ENCODE measurements at regions of chr11 and their contacts with region 1.

Region 1: DNA sequence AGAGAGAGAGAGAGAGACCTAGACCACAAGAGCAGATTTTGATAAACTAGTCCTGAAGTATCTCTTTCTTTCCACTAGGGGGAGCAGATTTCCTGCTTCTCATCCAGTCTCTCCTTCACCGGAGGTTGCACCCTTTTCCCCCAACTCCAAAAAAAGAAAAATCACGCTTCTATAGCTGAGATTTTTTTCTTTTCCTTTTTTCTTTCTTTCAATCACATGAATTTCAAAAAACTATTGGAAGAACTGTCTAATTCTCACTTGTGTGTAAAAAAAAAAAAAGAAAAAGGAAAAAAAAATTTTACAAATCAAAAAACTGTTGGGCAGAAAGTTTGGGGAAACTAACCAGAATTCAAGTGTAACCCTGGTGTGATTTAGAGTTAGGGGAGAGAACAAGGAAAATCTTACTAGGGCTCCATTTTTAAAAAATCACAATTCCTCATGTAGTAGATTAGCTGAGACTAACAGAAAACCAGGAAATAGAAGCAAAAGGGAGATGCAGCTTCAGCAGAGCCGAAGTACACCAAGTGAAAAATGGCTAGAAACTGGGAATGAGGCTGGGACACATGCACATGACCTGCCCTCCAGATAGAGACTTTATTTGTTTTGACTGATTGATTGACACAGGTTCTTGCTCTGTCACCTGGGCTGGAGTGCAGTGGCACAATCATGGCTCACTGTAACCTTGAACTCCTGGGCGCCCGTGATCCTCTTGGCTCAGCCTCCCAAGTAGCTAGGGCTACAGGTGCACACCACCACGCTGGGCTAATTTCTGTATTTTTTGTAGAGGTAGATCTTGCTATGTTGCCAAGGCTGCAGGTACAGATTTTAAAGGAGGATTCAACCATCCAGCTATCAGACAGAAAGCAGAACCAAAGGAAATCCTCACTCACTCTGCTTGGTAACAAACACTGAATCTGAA is 27.1 kb downstream of the SDHD start:
- DNase-seq: no peak
- ATAC-seq: peak; percentile 87
- H3K4me3 ChIP-seq: no peak overlapping the region
- H3K27ac ChIP-seq: peak overlapping the region; percentile 24; the same call in 1 of the 2 replicates
- H3K4me1 ChIP-seq: no peaks in the 10 kb centered on the region
- H3K27me3 ChIP-seq: no peaks in the 10 kb centered on the region
- CTCF ChIP-seq: peak; percentile 71; the same call in 1 of the 2 replicates

Region 2: GRCh38 chr11:112163875-112164685 is 50.3 kb after region 1 on chr11 and contains the start of gene IL18:
- CTCF ChIA-PET with region 1: interaction called, 3 read pairs
- POLR2A ChIA-PET with region 1: no interaction called
- in situ Hi-C with region 1: no loop called
- intact Hi-C with region 1: loop called (anchors 5 kb)
- DNase-seq: peak; percentile 78
- ATAC-seq: peak; percentile 96
- H3K4me3 ChIP-seq: peak within 1 kb of the TSS; percentile 49 to 77
- H3K27ac ChIP-seq: peak within 1 kb of the TSS; percentile 79
- H3K4me1 ChIP-seq: peaks cover 41% of the 10 kb centered on the region
- H3K27me3 ChIP-seq: no peaks in the 10 kb centered on the region
- CTCF ChIP-seq: no peak
- total RNA-seq, gene IL18: 22.5 TPM

Region 3: DNA sequence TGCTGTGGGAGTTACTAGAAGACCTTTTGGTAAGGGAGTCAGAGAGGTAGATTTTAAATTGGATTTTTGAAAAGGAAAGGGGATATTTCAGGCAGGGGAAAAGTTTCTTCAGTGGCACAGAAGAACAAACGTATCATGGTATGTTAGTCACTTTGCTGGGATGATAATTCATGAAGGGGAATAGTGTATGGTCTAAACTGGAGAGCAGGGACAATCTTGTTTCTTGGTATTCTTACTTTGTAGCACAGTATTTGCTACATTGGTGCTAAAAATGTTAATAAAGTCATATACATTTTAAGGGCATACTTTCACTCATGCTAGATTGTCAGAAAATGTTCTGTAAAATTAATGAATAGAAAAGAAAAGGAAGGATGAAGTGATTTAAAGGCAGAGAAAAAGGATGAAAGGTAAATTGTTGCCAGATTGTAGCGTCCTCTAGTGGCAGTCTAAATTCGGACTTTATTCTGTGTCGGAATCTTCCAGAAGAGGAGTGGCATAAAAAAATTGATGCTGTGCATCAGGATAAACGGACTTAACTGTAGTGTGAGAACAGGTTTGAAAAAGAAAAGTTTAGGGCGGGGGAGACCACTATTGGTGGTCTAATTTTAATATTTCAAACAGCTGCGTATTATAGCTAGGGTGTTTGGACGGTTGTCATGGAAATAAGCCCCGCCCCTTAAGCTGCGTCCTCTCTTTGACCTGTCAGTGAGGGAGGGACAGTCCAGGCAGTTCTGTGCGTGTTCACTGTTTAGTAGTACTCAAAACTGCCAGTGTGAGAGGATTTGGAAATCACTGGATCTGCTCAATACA is 61.2 kb after region 1 on chr11 and contains the start of gene BCO2:
- CTCF ChIA-PET with region 1: interaction called, 4 read pairs
- POLR2A ChIA-PET with region 1: interaction called, 3 read pairs
- in situ Hi-C with region 1: no loop called
- intact Hi-C with region 1: loop called (anchors 2 kb)
- DNase-seq: peak; percentile 74
- ATAC-seq: peak; percentile 98
- H3K4me3 ChIP-seq: peak within 1 kb of the TSS; percentile 35 to 57
- H3K27ac ChIP-seq: peak within 1 kb of the TSS; percentile 67
- H3K4me1 ChIP-seq: peaks cover 11% of the 10 kb centered on the region
- H3K27me3 ChIP-seq: no peaks in the 10 kb centered on the region
- CTCF ChIP-seq: peak; percentile 97
- total RNA-seq, gene BCO2: 2.5 TPM

Measured in Panc1 (cell line).